ENCODE measurements at regions of chr12 and their contacts with region 1.

Region 1: GRCh38 chr12:53180220-53180930 is at the starts of genes CSAD and ZNF740:
- DNase-seq: peak; percentile 91
- ATAC-seq: peak; percentile 94
- H3K4me3 Mint-ChIP-seq: peak within 1 kb of the TSS; percentile 93
- H3K27ac Mint-ChIP-seq: peak within 1 kb of the TSS; percentile 98
- H3K4me1 Mint-ChIP-seq: peaks cover 53% of the 10 kb centered on the region
- H3K27me3 Mint-ChIP-seq: no peaks in the 10 kb centered on the region
- CTCF ChIP-seq: no peak
- total RNA-seq, gene CSAD: 25.7 and 34.6 TPM in 2 replicates
- total RNA-seq, gene ZNF740: 64.4 and 67.2 TPM in 2 replicates

Region 2: GRCh38 chr12:53005986-53006809 is 174.2 kb before region 1 on chr12 and contains the start of gene EIF4B:
- CTCF ChIA-PET with region 1: no interaction called
- POLR2A ChIA-PET with region 1: interaction called, 12 read pairs
- intact Hi-C with region 1: loop called (anchors 1 kb)
- DNase-seq: peak; percentile 97
- ATAC-seq: peak; percentile 90
- H3K4me3 Mint-ChIP-seq: peak within 1 kb of the TSS; percentile 98
- H3K27ac Mint-ChIP-seq: peak within 1 kb of the TSS; percentile 98
- H3K4me1 Mint-ChIP-seq: peaks cover 51% of the 10 kb centered on the region
- H3K27me3 Mint-ChIP-seq: peaks cover 1% of the 10 kb centered on the region
- CTCF ChIP-seq: no peak
- total RNA-seq, gene EIF4B: 726 and 733 TPM in 2 replicates

Region 3: GRCh38 chr12:53159195-53159839 is 21.1 kb before region 1 on chr12:
- CTCF ChIA-PET with region 1: interaction called, 11 read pairs
- POLR2A ChIA-PET with region 1: interaction called, 16 read pairs
- intact Hi-C with region 1: loop called (anchors 1 kb)
- DNase-seq: peak; percentile 78
- ATAC-seq: peak; percentile 100
- H3K4me3 Mint-ChIP-seq: no peak overlapping the region
- H3K27ac Mint-ChIP-seq: no peak overlapping the region
- H3K4me1 Mint-ChIP-seq: peaks cover 5% of the 10 kb centered on the region
- H3K27me3 Mint-ChIP-seq: no peaks in the 10 kb centered on the region
- CTCF ChIP-seq: peak; percentile 13

Region 4: DNA sequence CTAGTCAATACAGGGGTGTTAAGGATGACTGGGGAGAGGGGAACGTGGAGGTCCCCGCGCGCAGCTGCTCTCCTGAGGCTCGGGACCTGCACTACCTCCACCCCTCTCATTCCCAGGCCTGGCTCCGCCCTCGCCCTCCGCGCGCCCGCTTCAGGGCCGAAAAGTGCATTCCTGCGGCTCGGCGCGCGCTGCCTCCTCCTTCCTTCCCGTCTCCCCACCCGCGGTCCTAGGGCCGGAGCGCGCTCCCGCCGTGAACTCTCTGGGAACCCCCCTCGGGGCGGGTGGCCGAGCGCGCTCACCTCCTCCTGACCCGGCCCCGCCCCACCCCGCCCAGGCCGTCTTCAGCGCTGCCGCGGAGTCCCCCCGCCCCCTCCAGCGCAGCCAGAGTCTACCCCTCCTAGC is 40.4 kb after region 1 on chr12:
- CTCF ChIA-PET with region 1: no interaction called
- POLR2A ChIA-PET with region 1: interaction called, 44 read pairs
- intact Hi-C with region 1: loop called (anchors 1 kb)
- DNase-seq: peak; percentile 74
- ATAC-seq: peak; percentile 77
- H3K4me3 Mint-ChIP-seq: peak overlapping the region; percentile 89
- H3K27ac Mint-ChIP-seq: peak overlapping the region; percentile 96
- H3K4me1 Mint-ChIP-seq: peaks cover 48% of the 10 kb centered on the region
- H3K27me3 Mint-ChIP-seq: no peaks in the 10 kb centered on the region
- CTCF ChIP-seq: no peak

Region 5: DNA sequence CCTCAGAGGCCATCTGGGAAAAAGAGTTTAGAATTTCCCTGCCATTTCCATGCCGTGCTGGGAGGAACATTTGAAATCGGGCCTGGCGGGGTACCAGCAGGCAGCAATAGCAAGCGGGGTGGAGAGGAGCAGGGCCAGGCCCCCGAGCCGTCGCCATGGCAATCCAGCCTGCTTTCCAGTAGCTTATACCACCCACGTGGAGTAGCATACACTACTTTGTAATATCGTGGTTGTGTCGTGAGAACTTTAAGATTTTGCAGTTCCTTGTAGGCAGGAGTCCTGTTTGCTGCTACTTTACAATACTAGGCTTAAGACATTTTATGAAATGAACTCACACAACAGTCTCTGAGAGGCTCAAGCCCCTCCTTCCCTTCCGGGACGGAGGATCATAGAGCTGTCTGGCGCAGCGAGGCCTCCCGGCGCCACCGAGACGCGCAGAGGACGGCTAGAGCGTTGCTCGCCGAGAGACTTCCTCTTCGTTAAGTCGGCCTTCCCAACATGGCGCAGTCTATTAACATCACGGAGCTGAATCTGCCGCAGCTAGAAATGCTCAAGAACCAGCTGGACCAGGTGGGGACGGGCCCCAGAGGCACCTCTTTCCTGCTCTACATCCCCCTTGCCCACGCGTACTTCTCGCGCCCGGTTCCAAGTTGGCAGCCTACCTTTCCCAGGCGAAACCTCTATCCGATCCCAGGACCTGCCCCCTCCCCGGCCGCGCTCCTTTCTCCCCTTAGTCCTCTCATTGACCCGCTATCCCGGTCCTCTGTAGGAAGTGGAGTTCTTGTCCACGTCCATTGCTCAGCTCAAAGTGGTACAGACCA is 114.9 kb after region 1 on chr12 and contains the start of gene PFDN5:
- CTCF ChIA-PET with region 1: interaction called, 3 read pairs
- POLR2A ChIA-PET with region 1: interaction called, 25 read pairs
- intact Hi-C with region 1: loop called (anchors 1 kb)
- DNase-seq: peak; percentile 75
- ATAC-seq: peak; percentile 89
- H3K4me3 Mint-ChIP-seq: peak within 1 kb of the TSS; percentile 99
- H3K27ac Mint-ChIP-seq: peak within 1 kb of the TSS; percentile 97
- H3K4me1 Mint-ChIP-seq: peaks cover 48% of the 10 kb centered on the region
- H3K27me3 Mint-ChIP-seq: no peaks in the 10 kb centered on the region
- CTCF ChIP-seq: no peak
- total RNA-seq, gene PFDN5: 486 and 578 TPM in 2 replicates

Region 6: GRCh38 chr12:53500776-53501614 is 320.6 kb after region 1 on chr12 and contains the start of gene TARBP2:
- CTCF ChIA-PET with region 1: no interaction called
- POLR2A ChIA-PET with region 1: interaction called, 4 read pairs
- intact Hi-C with region 1: loop called (anchors 1 kb)
- DNase-seq: peak; percentile 94
- ATAC-seq: peak; percentile 81
- H3K4me3 Mint-ChIP-seq: peak within 1 kb of the TSS; percentile 92
- H3K27ac Mint-ChIP-seq: peak within 1 kb of the TSS; percentile 96
- H3K4me1 Mint-ChIP-seq: peaks cover 36% of the 10 kb centered on the region
- H3K27me3 Mint-ChIP-seq: no peaks in the 10 kb centered on the region
- CTCF ChIP-seq: no peak
- total RNA-seq, gene TARBP2: 45.7 and 49.6 TPM in 2 replicates

Measured in activated B cell treated with CpG ODN at 0.5 μM for 24 hours (primary cell).